CD4-positive, alpha-beta memory T cell (primary cell): ENCODE measurements at regions of chr5 and their contacts with region 1.

Region 1: DNA sequence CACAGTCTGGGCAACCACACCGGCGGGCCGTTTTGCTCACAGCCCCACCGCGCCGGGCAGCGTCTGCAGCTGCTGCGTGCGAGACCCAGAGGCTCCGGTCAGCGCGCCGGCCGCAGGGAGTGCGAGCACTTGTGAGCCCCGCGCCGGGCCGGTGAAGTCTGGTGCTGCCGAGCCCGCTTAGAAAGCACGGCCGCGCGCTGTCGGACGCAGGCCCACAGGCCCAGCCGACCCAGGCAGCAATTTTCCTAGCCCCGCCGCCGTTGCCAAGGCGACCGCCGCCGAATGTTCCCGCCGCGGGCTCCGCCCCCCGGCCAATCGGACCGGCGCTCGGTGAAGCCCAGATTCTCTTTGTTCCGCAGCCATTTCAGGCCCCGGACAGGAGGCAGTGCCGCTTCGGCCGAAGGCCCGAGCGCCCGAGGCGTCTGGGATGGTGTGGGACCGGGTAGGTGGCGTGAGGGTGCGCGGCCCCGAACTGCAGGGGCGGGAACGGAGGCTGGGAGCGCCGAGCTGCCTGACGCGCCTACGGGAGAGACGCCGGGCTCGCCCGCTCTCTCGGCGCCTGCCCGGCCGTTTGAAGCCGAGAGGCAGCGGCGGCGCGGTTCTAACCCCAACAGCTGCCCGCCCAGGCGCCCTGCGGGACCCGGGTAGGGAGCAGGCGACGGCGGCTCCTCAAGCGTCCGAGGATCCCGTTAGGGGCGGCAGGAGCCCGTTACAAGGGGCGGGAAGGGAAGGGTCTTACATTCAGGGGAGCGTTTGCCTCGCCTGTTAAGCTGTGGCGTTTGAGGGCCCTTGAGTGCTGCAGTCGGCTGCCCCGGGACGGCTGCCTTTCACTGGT is at the start of gene TNPO1:
- DNase-seq: peak; percentile 86 to 90 (median 87)
- H3K4me3 ChIP-seq: peak within 1 kb of the TSS; percentile 69 to 74
- H3K4me3 Mint-ChIP-seq: peak within 1 kb of the TSS; percentile 91 to 98 (median 94)
- H3K27ac ChIP-seq: peak within 1 kb of the TSS; percentile 86
- H3K27ac Mint-ChIP-seq: peak within 1 kb of the TSS; percentile 95 to 98 (median 96)
- H3K4me1 ChIP-seq: peaks cover 26% of the 10 kb centered on the region
- H3K4me1 Mint-ChIP-seq: peaks cover 11 to 31% (median 15%) of the 10 kb centered on the region in 4 donors
- H3K27me3 ChIP-seq: no peaks in the 10 kb centered on the region
- H3K27me3 Mint-ChIP-seq: peaks cover 5 to 8% of the 10 kb centered on the region in 2 donors
- total RNA-seq, gene TNPO1: 86.2 to 86.4 TPM

Region 2: GRCh38 chr5:72307968-72308852 is 508.3 kb before region 1 on chr5:
- CTCF ChIA-PET with region 1: no interaction called
- POLR2A ChIA-PET with region 1: no interaction called
- intact Hi-C with region 1: loop called (anchors 5 kb)
- DNase-seq: peak; percentile 95 to 96 (median 96)
- H3K4me3 ChIP-seq: peak overlapping the region; percentile 79 to 94
- H3K4me3 Mint-ChIP-seq: peak overlapping the region; percentile 72 to 94 (median 92)
- H3K27ac ChIP-seq: peak overlapping the region; percentile 88
- H3K27ac Mint-ChIP-seq: peak overlapping the region; percentile 79 to 97 (median 95)
- H3K4me1 ChIP-seq: peaks cover 13% of the 10 kb centered on the region
- H3K4me1 Mint-ChIP-seq: peaks cover 10 to 22% (median 18%) of the 10 kb centered on the region in 4 donors
- H3K27me3 ChIP-seq: no peaks in the 10 kb centered on the region
- H3K27me3 Mint-ChIP-seq: no peaks in the 10 kb centered on the region

Region 3: GRCh38 chr5:72611118-72611730 is 205.3 kb before region 1 on chr5:
- CTCF ChIA-PET with region 1: interaction called, 99 read pairs
- POLR2A ChIA-PET with region 1: interaction called, 3 read pairs
- intact Hi-C with region 1: no loop called
- DNase-seq: peak in 4 of 5 donors; percentile 16 to 24 (median 22)
- H3K4me3 ChIP-seq: no peak overlapping the region
- H3K4me3 Mint-ChIP-seq: peak overlapping the region in 1 of 8 donors; percentile 29
- H3K27ac ChIP-seq: no peak overlapping the region
- H3K27ac Mint-ChIP-seq: no peak overlapping the region
- H3K4me1 ChIP-seq: no peaks in the 10 kb centered on the region
- H3K4me1 Mint-ChIP-seq: peaks cover 0 to 6% (median 1%) of the 10 kb centered on the region in 4 donors
- H3K27me3 ChIP-seq: no peaks in the 10 kb centered on the region
- H3K27me3 Mint-ChIP-seq: peaks cover 4% of the 10 kb centered on the region in 2 donors

Region 4: DNA sequence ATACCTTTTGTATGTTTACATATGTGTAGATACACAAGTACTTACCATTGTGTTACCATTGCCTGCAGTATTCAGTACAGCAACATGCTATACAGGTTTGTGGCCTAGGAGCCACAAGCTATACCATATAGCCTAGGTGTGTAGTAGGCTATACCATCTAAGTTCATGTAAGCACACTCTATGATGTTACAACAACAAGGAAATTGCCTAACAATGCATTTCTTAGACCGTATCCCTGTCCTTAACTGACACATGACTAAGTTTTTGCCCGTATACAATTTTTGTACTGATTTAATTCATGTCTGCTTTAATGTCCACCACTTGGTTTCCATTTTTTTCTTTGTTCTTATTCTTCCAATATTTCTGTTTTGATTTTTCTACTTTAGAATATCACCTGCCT is 18.4 kb after region 1 on chr5:
- CTCF ChIA-PET with region 1: interaction called, 27 read pairs
- POLR2A ChIA-PET with region 1: interaction called, 3 read pairs
- intact Hi-C with region 1: no loop called
- DNase-seq: no peak
- H3K4me3 ChIP-seq: no peak overlapping the region
- H3K4me3 Mint-ChIP-seq: no peak overlapping the region
- H3K27ac ChIP-seq: no peak overlapping the region
- H3K27ac Mint-ChIP-seq: no peak overlapping the region
- H3K4me1 ChIP-seq: no peaks in the 10 kb centered on the region
- H3K4me1 Mint-ChIP-seq: peaks cover 0 to 3% (median 0%) of the 10 kb centered on the region in 4 donors
- H3K27me3 ChIP-seq: no peaks in the 10 kb centered on the region
- H3K27me3 Mint-ChIP-seq: peaks cover 0 to 1% of the 10 kb centered on the region in 2 donors

Region 5: DNA sequence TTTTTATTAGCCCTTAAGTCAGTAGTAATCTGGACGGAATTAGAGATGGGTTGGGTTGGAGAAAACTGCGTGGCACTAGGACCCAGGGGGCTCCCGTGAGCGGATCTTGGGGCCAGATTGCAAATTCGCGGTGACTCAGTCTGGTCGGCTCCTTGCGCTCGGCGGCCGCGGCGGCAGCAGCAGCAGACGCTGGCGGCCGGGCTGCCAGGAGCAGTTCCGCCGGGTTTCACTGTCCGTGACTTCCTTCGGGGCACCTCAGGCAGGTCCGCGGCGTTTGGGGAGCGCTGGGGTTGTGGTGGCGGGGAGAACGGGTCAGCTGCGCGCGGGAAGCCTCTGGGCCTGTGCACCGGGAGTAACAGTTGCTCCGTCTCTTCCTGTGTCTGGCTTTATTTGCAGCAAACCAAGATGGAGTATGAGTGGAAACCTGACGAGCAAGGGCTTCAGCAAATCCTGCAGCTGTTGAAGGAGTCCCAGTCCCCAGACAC is 31.5 kb after region 1 on chr5:
- CTCF ChIA-PET with region 1: interaction called, 16 read pairs
- POLR2A ChIA-PET with region 1: interaction called, 54 read pairs
- intact Hi-C with region 1: loop called (anchors 1 kb)
- DNase-seq: peak; percentile 82 to 87 (median 85)
- H3K4me3 ChIP-seq: peak overlapping the region; percentile 77 to 83
- H3K4me3 Mint-ChIP-seq: peak overlapping the region; percentile 93 to 99 (median 98)
- H3K27ac ChIP-seq: peak overlapping the region; percentile 84
- H3K27ac Mint-ChIP-seq: peak overlapping the region; percentile 93 to 98 (median 97)
- H3K4me1 ChIP-seq: peaks cover 46% of the 10 kb centered on the region
- H3K4me1 Mint-ChIP-seq: peaks cover 28 to 61% (median 42%) of the 10 kb centered on the region in 4 donors
- H3K27me3 ChIP-seq: no peaks in the 10 kb centered on the region
- H3K27me3 Mint-ChIP-seq: no peaks in the 10 kb centered on the region